Right ventricle myocardium inferior (tissue), 1 donor: ENCODE measurements at regions of chr13 and their contacts with region 1.

Region 1: DNA sequence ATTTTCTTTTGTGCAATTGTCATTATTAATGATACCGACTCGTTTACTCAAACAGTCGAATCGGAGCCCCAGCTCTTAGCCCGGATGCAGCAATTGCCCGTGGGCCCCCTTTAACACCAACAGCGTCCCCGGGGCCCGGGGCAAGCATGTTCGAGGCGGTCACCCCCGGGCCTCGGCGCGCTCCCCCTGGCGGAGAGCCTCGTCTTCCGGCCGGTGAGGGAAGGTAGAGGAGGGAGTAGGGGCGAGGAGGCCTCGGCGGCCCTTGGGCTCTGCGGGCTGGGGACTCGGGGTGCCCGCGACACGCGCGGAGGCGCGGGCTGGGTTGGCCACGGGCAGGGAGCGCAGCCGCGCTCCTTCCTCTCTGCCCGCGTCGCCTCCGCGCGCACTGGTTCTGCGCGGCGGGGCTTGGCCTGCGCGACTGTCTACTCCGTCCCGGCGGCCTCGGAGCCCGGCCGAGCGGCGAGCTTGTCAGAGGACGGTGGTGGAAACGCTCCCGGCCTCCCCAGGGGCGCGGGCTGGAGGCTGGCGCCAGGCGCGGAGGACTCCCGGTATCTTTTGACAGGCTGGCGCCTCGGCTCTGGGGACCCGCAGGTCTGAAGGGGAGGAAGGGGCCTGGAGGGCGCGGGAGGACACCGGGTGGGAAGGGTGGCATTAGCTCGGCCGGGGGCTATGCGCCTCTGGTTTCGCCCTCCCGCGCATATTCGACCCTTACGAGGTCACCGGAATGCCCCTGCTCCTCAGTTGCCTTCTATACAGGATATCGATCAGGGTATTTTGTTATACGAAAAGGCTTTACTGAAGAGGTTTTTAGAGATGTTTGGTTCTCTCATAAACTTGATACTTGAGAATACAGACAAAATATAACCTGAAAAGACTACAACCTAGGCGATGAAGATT is 1.5 kb downstream of the BIVM start:
- DNase-seq: peak; percentile 89
- ATAC-seq: peak; percentile 91

Region 2: GRCh38 chr13:102773441-102774215 is 26.8 kb before region 1 on chr13 and contains the start of gene TEX30:
- intact Hi-C with region 1: loop called (anchors 1 kb)
- DNase-seq: peak; percentile 92
- ATAC-seq: peak; percentile 100
- total RNA-seq, gene TEX30: 9.5 TPM

Region 3: GRCh38 chr13:102784501-102784900 is 15.9 kb before region 1 on chr13:
- intact Hi-C with region 1: no loop called
- DNase-seq: no peak
- ATAC-seq: peak; percentile 92

Region 4: DNA sequence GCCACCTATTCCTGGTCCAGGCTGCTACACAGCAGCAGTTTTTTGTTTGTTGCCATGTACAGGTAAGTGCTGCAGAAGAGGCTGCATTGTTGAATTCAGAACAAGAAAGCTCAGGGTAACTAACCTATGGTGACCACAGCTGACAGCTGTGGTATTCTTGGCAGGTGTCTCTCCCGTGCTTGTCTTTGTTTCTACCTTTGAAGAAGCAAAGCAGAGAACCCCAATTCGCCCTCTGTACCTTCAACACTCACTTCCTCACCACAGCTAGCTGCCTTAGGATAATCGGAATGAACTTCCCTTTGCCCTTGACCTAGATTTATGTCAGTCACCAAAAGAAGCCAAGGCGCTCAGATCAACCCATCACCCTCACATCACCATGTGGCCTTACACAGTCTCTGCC is 1969.2 kb after region 1 on chr13:
- intact Hi-C with region 1: no loop called
- DNase-seq: no peak
- ATAC-seq: no peak